AG04449 (cell line): ENCODE measurements at regions of chr2 and their contacts with region 1.

Region 1: GRCh38 chr2:43226558-43226954 is at the start of gene ZFP36L2:
- DNase-seq: no peak
- H3K4me3 ChIP-seq: peak within 1 kb of the TSS; percentile 86
- CTCF ChIP-seq: peak; percentile 2

Region 2: DNA sequence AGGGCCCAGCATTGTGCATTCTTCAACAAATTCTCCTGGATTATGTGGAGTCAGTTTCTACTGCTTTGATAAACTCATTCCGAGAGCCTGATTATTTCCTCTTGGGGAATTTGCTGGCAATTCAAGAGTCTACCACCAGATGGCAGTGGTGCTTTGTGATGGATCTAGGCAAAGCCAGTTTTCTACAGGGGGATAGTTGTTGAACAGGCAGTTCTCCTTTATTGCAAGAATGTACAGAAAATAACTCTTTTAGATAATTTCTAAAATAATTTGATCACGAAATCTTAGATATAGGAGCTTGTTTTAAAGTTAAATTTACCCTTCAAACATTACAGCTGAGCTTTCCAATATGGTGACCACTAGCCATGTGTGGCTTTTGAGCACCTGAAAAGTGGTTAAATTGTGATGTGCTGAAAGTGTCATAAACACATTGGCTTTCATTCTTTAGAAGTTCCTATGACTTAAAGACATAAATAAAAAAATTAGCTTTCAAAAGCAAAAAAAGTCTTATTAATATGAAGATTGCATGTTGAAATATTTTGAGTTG is 367.5 kb before region 1 on chr2:
- CTCF ChIA-PET with region 1: interaction called, 59 read pairs
- POLR2A ChIA-PET with region 1: no interaction called
- DNase-seq: peak; percentile 24
- H3K4me3 ChIP-seq: no peak overlapping the region
- CTCF ChIP-seq: peak; percentile 72

Region 3: GRCh38 chr2:42959234-42960001 is 267.1 kb before region 1 on chr2:
- CTCF ChIA-PET with region 1: interaction called, 45 read pairs
- POLR2A ChIA-PET with region 1: interaction called, 16 read pairs
- DNase-seq: no peak
- H3K4me3 ChIP-seq: no peak overlapping the region
- CTCF ChIP-seq: no peak

Region 4: GRCh38 chr2:43024515-43025011 is 202.0 kb before region 1 on chr2:
- CTCF ChIA-PET with region 1: interaction called, 20 read pairs
- POLR2A ChIA-PET with region 1: interaction called, 3 read pairs
- DNase-seq: no peak
- H3K4me3 ChIP-seq: no peak overlapping the region
- CTCF ChIP-seq: peak; percentile 98

Region 5: DNA sequence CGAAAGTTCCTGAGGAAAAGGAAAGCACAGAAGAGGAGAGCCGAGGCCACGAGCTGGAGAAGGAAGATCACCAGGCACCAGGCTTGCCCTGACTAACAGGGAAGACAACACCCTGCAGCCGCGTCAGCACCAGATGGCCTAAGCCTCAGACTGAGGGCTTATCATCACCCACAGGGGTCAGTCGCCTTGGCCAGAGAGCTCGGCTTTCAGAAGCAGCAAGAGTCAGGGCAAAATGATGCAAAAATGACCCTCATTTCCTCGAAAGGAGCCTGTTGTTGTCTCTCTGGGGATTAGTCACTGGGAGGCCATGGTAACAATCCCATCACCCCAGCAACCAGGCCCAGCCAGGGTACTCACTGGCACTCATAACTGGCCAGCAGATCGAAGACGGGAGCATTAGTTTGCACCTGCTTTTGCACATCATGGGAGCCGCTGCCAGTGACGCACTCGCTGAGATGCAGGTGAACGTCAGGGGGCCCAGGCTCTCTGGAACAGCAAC is 42.6 kb after region 1 on chr2:
- CTCF ChIA-PET with region 1: interaction called, 11 read pairs
- POLR2A ChIA-PET with region 1: no interaction called
- DNase-seq: peak; percentile 52
- H3K4me3 ChIP-seq: no peak overlapping the region
- CTCF ChIP-seq: no peak

Region 6: GRCh38 chr2:43542285-43542937 is 315.9 kb after region 1 on chr2:
- CTCF ChIA-PET with region 1: interaction called, 46 read pairs
- POLR2A ChIA-PET with region 1: interaction called, 3 read pairs
- DNase-seq: no peak
- H3K4me3 ChIP-seq: no peak overlapping the region
- CTCF ChIP-seq: peak; percentile 12